Psoas muscle (tissue), 8 donors: ENCODE measurements at regions of chr9 and their contacts with region 1.

Region 1: DNA sequence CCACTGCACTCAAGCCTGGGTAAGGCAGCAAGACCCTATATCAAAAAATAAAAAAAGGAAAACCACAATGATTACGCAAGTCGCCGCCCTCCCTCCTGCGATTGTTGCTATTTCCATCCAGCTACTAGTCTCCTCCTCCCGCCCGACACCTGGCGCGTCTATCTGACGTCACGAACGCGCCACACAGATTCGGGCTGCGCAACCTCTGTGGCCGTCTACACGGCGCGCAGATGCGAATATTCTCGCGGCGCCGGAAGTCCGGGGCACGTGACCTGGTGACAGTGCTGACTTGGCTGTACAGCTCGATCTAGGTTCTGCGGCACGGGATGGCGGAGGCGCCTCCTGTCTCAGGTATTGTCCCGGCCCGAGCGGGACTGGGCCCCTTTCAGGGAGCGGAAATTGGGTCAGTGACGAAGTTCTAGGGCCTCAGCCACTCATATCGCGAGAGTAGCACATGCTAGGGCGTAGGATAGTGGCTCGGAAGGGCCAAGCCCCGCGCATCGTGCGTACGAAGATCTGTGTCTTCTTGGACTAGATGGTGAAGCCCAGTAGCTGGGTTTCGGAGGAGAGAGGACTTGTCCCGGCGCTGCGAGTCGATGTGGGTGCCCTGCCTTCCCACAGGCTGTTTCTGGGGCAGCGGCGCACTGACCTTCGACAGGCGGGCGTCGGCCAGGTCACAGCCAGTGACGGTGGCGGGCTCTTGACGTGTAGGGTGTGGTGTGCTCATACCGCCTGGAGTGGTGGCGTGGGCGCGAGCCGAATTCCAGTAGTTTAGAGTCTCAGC is at the start of gene NFX1:
- DNase-seq: peak; percentile 99
- ATAC-seq: peak; percentile 88 to 92 (median 90)
- H3K4me3 ChIP-seq: peak within 1 kb of the TSS; percentile 83
- H3K27ac ChIP-seq: peak within 1 kb of the TSS; percentile 99
- H3K4me1 ChIP-seq: peaks cover 54% of the 10 kb centered on the region
- H3K27me3 ChIP-seq: no peaks in the 10 kb centered on the region
- CTCF ChIP-seq: no peak
- total RNA-seq, gene NFX1: 33.8 to 59.2 (median 46.1) TPM

Region 2: DNA sequence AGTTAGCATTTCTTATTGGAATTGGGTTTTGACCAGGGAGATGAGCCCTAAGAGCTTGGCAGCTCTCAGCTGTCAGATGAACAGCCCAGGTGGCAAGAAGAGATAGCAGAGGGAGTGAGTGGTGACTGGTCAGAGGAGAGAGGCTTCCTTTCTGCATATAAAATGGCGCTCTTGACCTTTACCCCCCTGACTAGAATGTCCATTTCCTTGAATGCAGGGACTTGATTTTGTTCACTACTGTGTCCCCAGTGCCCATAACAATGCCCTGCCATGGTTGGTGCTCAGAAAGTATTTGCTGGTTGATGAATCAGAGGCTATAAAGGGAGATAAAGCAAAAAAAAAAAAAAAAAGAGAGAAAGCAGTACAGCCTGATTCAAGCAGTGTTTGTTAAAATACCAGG is 18.4 kb before region 1 on chr9:
- intact Hi-C with region 1: no loop called
- DNase-seq: no peak
- ATAC-seq: peak in 1 of 4 donors; percentile 51
- H3K4me3 ChIP-seq: no peak overlapping the region
- H3K27ac ChIP-seq: no peak overlapping the region
- H3K4me1 ChIP-seq: no peaks in the 10 kb centered on the region
- H3K27me3 ChIP-seq: no peaks in the 10 kb centered on the region
- CTCF ChIP-seq: no peak

Region 3: DNA sequence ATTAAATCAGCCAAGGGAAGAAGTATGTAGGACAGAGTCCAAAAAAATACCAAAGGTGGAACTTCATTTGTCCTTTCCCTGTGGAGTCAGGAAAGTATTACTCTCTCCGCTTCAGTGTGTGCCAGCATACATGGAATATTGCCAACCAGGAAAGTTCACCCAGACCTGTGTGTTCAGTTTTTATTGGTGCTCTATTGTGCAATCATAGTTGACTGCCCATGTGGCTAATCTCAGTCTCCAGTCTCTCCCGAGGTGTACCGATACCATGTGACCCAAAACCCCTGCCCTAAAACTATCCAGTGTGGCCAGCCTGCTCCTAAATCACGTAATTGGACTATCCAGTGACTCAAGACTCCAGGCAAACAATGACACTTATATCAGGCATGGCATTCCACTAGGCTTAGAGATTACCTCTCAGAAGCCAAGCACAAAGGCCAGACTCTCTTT is 38.7 kb after region 1 on chr9:
- intact Hi-C with region 1: loop called (anchors 5 kb)
- DNase-seq: peak; percentile 28 to 60
- ATAC-seq: peak; percentile 94 to 97 (median 96)
- H3K4me3 ChIP-seq: peak overlapping the region; percentile 8
- H3K27ac ChIP-seq: peak overlapping the region; percentile 76
- H3K4me1 ChIP-seq: peaks cover 17% of the 10 kb centered on the region
- H3K27me3 ChIP-seq: no peaks in the 10 kb centered on the region
- CTCF ChIP-seq: no peak

Region 4: GRCh38 chr9:33366979-33367480 is 76.6 kb after region 1 on chr9:
- intact Hi-C with region 1: no loop called
- DNase-seq: no peak
- ATAC-seq: no peak
- H3K4me3 ChIP-seq: no peak overlapping the region
- H3K27ac ChIP-seq: no peak overlapping the region
- H3K4me1 ChIP-seq: no peaks in the 10 kb centered on the region
- H3K27me3 ChIP-seq: no peaks in the 10 kb centered on the region
- CTCF ChIP-seq: no peak

Region 5: DNA sequence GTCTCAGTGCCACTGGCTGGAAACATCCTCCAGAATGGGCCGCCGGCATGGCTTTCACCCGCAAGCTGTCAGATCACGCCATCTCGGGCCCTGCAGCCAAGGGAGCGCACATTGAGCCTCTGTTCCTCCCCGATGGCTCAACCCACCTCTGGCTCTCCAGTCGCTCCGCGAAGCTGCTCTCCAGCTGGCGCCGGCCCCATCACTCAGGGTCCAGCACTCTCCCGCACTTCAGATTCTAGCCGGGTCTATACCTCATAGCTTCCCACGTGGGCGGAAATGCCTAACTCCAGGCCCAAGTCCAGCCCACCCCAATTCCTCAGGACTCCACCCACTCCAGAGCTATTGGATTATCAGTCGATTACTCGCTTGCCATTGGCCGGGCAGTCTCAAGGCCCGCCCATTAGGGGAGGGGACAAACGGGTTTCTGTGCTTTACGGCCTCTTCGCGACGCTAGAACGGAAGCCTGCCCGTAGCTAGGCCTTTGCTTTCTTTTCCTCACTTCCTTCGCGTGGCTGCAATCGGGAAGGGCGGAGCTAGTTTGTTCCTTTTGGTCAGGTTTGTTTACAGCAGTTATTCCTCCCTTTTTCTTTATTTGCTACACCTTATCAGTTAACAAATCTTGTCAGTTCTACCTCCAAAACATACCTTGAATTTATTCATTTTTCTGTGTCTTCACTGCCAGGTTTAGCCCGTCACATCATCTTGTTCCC is 183.4 kb after region 1 on chr9 and contains the start of gene NOL6:
- intact Hi-C with region 1: loop called in 1 of 2 experiments (anchors 5 kb)
- DNase-seq: peak; percentile 98
- ATAC-seq: peak; percentile 99 to 100 (median 100)
- H3K4me3 ChIP-seq: peak within 1 kb of the TSS; percentile 97
- H3K27ac ChIP-seq: peak within 1 kb of the TSS; percentile 78
- H3K4me1 ChIP-seq: peaks cover 16% of the 10 kb centered on the region
- H3K27me3 ChIP-seq: no peaks in the 10 kb centered on the region
- CTCF ChIP-seq: no peak
- total RNA-seq, gene NOL6: 18.8 to 39.9 (median 33.1) TPM